Prostate gland (tissue), 2 donors: ENCODE measurements at regions of chrX and their contacts with region 1.

Region 1: DNA sequence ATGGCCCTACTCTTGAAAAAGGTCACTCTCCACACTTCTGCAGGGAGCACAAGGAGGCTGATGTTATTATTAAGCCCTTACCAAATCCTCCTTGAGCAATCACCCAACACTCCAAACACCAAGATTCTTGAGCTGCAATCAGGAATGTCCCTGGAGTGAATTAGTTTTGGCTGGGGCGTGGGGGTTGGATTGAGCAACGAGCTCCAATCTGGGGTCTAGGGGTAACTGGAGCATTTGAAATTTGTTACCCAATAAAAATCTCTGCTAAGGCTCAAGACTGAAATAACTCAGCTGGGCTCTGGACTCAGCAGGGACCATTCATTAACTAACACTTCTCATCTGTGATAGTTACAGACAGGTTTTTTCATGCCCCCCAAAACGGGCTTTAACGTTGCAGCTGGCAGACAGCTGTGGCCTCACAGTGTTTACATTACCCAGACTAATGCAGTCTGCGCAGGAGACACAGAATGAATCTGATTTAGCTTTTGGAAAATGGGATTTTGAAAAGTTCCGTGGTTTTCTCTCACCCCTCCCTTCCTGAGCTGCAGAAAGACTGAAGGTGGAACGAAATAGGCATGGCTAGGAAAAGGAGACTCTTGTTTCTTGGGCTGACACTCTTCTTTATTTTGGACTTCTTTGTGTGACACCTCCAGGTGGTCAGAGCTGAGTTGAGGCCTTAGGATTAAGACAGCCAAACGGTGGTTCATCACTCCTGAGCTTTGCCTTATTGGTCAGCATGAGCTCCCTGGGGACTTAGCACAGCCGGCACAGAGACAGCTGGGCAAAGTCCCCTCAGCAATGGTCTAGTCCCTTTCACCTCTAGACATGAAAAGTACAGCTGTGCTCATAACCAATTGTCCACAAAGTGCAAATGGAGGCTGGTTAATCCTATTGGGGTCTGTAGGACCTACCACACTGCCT is 26.6 kb downstream of the PLAC1 start:
- DNase-seq: peak; percentile 4
- H3K4me3 ChIP-seq: no peak overlapping the region
- H3K27ac ChIP-seq: no peak overlapping the region
- H3K4me1 ChIP-seq: no peaks in the 10 kb centered on the region
- H3K27me3 ChIP-seq: no peaks in the 10 kb centered on the region
- CTCF ChIP-seq: no peak
- POLR2A ChIP-seq: no peak

Region 2: GRCh38 chrX:134588781-134589180 is 42.9 kb before region 1 on chrX:
- intact Hi-C with region 1: no loop called
- DNase-seq: no peak
- H3K4me3 ChIP-seq: no peak overlapping the region
- H3K27ac ChIP-seq: no peak overlapping the region
- H3K4me1 ChIP-seq: no peaks in the 10 kb centered on the region
- H3K27me3 ChIP-seq: no peaks in the 10 kb centered on the region
- CTCF ChIP-seq: no peak
- POLR2A ChIP-seq: no peak

Region 3: DNA sequence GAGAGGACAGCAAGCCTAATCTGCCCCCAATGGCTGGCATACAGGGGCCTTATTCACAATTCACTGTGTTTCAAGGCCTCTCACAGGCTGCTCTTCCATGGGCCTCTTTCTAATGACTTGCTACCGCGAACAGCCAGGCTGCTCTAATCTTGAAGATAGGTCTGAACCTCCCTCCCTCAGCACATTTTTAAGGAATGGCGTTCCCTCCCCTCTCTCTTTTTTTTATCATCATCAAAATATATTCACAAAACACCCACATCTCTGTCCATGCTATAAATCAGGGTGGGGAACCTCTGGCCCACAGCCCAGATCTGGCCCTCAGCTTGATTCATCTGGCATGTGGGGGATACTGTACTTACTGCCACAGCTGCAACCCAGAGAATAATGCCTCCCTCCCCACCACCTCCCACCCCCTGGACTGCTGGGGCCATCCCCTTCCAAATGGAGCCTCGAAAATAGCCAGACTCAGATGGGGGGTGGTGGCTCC is 102.8 kb after region 1 on chrX:
- intact Hi-C with region 1: loop called (anchors 10 kb)
- DNase-seq: no peak
- H3K4me3 ChIP-seq: no peak overlapping the region
- H3K27ac ChIP-seq: no peak overlapping the region
- H3K4me1 ChIP-seq: no peaks in the 10 kb centered on the region
- H3K27me3 ChIP-seq: no peaks in the 10 kb centered on the region
- CTCF ChIP-seq: no peak
- POLR2A ChIP-seq: no peak